Esophagus muscularis mucosa (tissue), 4 donors: ENCODE measurements at regions of chr1 and their contacts with region 1.

Region 1: GRCh38 chr1:150464422-150464826 is 22.8 kb upstream of the TARS2 start:
- DNase-seq: no peak
- H3K4me3 ChIP-seq: no peak overlapping the region
- H3K27ac ChIP-seq: no peak overlapping the region
- H3K4me1 ChIP-seq: peaks cover 0 to 11% (median 7%) of the 10 kb centered on the region in 4 donors
- H3K27me3 ChIP-seq: no peaks in the 10 kb centered on the region
- CTCF ChIP-seq: peak; percentile 78 to 86 (median 82)
- EP300 ChIP-seq: no peak
- POLR2A ChIP-seq: no peak

Region 2: DNA sequence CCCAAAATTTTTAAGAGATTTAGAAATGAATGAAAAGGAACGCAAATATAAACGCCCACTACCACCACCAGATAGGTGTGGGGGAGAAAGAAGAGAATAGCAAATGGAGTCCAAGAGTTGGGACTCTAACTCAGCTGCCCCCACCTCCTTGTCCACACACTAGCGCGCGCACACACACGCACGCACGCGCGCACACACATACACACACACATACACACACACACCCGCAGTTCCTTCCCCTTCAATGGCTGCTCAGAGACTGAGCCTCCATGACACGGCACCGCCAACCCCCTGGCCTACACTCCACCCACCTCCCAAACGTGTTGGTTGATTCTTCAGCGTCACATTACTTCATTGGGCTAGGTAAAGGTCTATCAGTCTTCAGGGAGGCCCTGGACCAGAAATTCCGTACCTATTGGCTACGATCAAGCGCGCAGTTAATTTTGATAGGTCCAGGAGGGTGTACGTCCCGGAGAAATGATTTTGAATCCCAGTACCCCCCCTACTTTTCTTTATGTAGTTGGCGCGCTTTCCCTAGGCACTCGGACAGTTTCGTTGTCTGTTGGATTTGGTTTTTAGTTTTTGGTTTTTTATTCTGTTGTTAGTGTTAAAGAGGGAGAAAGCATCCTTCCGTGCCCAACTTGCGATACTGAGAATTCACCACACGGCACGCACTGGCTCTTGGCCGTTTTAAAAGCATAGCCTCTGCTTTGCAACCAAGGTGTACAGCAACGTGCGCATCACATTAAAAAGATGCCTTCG is 228.4 kb before region 1 on chr1 and contains the start of gene ANP32E:
- intact Hi-C with region 1: no loop called
- DNase-seq: peak; percentile 99
- H3K4me3 ChIP-seq: peak within 1 kb of the TSS; percentile 84 to 100 (median 86)
- H3K27ac ChIP-seq: peak within 1 kb of the TSS; percentile 96 to 100 (median 99)
- H3K4me1 ChIP-seq: peaks cover 4 to 18% (median 16%) of the 10 kb centered on the region in 4 donors
- H3K27me3 ChIP-seq: no peaks in the 10 kb centered on the region
- CTCF ChIP-seq: peak in 2 of 3 experiments; percentile 36 to 43
- EP300 ChIP-seq: no peak
- POLR2A ChIP-seq: peak; percentile 72
- total RNA-seq, gene ANP32E: 15.6 to 20.3 (median 18.6) TPM

Region 3: GRCh38 chr1:150321826-150322166 is 142.6 kb before region 1 on chr1:
- intact Hi-C with region 1: no loop called
- DNase-seq: no peak
- H3K4me3 ChIP-seq: peak overlapping the region; percentile 74 to 83 (median 80)
- H3K27ac ChIP-seq: peak overlapping the region; percentile 86 to 90 (median 88)
- H3K4me1 ChIP-seq: peaks cover 12 to 32% (median 27%) of the 10 kb centered on the region in 4 donors
- H3K27me3 ChIP-seq: no peaks in the 10 kb centered on the region
- CTCF ChIP-seq: no peak
- EP300 ChIP-seq: no peak
- POLR2A ChIP-seq: no peak

Region 4: DNA sequence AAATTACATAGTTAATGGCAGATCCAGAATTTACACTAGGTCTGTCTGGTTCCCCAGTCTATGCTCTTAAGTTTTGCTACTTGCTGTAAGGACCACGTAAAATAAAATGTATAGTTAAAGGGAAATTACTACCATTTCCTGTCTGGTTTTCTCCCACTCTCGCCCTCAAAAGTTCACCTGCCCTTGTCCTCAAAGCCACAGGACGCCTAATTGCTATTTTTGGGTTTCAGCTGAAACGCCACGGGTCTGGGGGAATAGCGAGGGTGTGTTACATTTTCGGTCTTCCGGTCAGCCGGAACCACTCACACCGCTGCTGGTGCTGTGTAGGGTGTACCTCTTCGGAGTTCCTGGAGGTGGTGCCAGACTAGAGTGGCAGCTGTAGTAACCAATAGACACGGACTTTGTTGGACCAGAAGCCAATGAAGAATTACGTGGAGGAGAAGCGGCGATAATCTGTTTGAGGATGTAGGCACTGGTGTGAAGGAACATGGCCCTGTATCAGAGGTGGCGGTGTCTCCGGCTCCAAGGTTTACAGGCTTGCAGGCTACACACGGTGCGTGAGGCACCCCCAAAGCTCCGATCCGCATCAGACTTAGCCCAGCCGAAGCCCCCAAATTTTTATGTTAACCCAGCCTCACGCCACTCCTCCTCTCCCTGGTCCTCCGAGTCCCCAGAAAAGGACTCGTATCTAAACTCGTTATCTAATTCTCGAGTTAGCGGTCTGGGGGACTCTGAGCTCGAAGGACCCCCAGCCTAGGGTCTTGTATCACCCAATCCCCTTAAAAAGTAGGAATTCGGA is 22.7 kb after region 1 on chr1 and contains the start of gene TARS2:
- intact Hi-C with region 1: no loop called
- DNase-seq: peak; percentile 98
- H3K4me3 ChIP-seq: peak within 1 kb of the TSS; percentile 64 to 93 (median 72)
- H3K27ac ChIP-seq: peak within 1 kb of the TSS; percentile 72 to 78 (median 76)
- H3K4me1 ChIP-seq: peaks cover 9 to 18% (median 12%) of the 10 kb centered on the region in 4 donors
- H3K27me3 ChIP-seq: no peaks in the 10 kb centered on the region
- CTCF ChIP-seq: peak in 2 of 3 experiments; percentile 34 to 41
- EP300 ChIP-seq: no peak
- POLR2A ChIP-seq: no peak
- total RNA-seq, gene TARS2: 5.8 to 19.4 (median 12.8) TPM

Region 5: DNA sequence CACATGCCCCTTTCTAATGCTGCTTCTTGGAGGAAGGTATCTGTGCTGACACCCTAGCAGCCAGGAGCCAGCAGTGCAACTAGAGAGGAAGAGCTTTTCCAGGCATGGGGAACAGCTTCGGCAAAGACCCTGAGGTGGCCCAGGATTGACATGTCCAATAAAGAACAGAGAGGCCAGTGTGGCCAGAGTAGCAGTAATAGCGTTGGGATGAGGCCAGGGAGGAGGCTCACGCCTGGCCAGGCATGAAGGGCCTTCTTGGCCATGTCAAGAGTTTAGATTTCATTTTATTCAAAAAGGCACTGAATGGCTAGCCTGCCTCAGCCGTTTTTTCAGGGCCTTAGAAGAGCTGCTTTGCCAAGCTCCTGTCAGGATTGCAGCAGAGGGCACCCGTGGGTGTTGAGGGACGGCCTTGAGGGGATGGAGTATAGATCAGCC is 68.5 kb after region 1 on chr1:
- intact Hi-C with region 1: loop called (anchors 2 kb)
- DNase-seq: no peak
- H3K4me3 ChIP-seq: no peak overlapping the region
- H3K27ac ChIP-seq: peak overlapping the region; percentile 70 to 86 (median 81)
- H3K4me1 ChIP-seq: peaks cover 24 to 77% (median 64%) of the 10 kb centered on the region in 4 donors
- H3K27me3 ChIP-seq: no peaks in the 10 kb centered on the region
- CTCF ChIP-seq: no peak
- EP300 ChIP-seq: no peak
- POLR2A ChIP-seq: no peak